Caco-2 (cell line): ENCODE measurements at regions of chr5 and their contacts with region 1.

Region 1: DNA sequence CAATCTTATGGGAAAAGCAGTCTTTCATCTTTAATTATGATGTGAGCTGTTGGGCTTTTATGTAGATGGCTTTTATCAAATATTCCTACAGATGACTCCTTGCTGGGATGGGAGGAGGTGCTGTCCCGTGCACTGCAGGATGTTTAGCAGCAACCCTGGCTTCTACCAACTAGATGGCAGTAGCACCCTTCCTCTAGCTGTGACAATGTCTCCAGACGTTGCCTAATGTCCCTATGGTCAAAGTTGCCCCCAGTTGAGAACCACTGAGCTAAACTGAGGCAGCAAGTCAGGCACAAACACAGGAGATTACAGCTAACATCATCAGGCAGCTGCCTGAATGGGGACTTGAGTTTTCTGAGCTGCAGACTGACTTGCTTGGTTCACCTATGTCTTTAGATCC is 401.9 kb upstream of the PDE4D start:
- DNase-seq: peak; percentile 39 to 40
- H3K4me3 ChIP-seq: no peak overlapping the region
- H3K4me3 Mint-ChIP-seq: no peak overlapping the region
- H3K27ac Mint-ChIP-seq: no peak overlapping the region
- H3K4me1 ChIP-seq: no peaks in the 10 kb centered on the region
- H3K4me1 Mint-ChIP-seq: no peaks in the 10 kb centered on the region
- H3K27me3 ChIP-seq: no peaks in the 10 kb centered on the region
- H3K27me3 Mint-ChIP-seq: no peaks in the 10 kb centered on the region
- CTCF ChIP-seq: peak; percentile 61 to 70

Region 2: GRCh38 chr5:60586307-60586901 is 291.0 kb after region 1 on chr5:
- CTCF ChIA-PET with region 1: interaction called, 3 read pairs
- POLR2A ChIA-PET with region 1: no interaction called
- intact Hi-C with region 1: loop called (anchors 5 kb)
- DNase-seq: no peak
- H3K4me3 ChIP-seq: no peak overlapping the region
- H3K4me3 Mint-ChIP-seq: no peak overlapping the region
- H3K27ac Mint-ChIP-seq: no peak overlapping the region
- H3K4me1 ChIP-seq: no peaks in the 10 kb centered on the region
- H3K4me1 Mint-ChIP-seq: no peaks in the 10 kb centered on the region
- H3K27me3 ChIP-seq: no peaks in the 10 kb centered on the region
- H3K27me3 Mint-ChIP-seq: no peaks in the 10 kb centered on the region
- CTCF ChIP-seq: peak; percentile 27 to 54